ENCODE measurements at regions of chr1 and their contacts with region 1.

Region 1: GRCh38 chr1:16243936-16244649 is 7.1 kb upstream of the CPLANE2 start:
- DNase-seq: peak; percentile 80
- ATAC-seq: peak; percentile 34

Region 2: GRCh38 chr1:16351994-16352841 is 108.1 kb after region 1 on chr1 and contains the start of gene FBXO42:
- intact Hi-C with region 1: loop called (anchors 5 kb)
- DNase-seq: peak; percentile 96
- ATAC-seq: peak; percentile 97
- total RNA-seq, gene FBXO42: 17.1 TPM

Region 3: DNA sequence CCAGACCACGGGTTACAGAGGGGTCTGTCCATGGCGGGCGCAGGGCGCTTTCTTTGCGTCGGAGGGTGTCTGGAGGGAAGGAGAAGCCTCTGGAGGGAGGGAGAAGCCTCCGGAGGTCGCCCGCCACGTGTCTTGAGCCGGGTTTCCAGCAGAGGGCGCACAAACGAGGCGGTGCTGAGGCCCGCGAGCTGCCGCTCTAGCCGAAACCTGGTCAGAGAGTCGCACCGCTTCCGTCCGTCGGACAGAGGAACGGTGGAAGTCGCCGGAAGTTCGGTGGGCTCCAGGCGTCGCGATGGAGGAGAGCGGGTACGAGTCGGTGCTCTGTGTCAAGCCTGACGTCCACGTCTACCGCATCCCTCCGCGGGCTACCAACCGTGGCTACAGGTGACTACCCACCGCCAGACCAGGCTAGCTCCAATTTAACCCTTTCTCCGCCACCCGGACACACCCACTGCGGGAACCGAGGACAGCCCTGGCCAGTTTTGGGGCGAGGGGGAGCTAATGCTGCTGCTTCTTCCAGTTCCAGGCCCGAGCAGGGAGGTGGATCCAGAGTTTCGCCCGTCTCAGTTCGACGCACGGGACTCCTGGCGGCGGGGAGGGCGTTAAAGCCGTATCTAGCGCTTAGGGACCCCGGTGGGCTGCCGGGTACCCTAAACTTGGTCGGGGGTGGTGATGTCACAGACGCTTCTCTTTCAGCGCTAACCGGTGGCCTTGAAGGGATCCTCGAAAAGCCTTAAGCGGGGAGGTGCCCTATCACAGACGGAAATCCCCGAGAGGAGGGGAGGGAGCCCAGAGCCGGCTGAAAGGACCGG is 196.6 kb after region 1 on chr1 and contains the start of gene NECAP2:
- intact Hi-C with region 1: no loop called
- DNase-seq: peak; percentile 97
- ATAC-seq: peak; percentile 97
- total RNA-seq, gene NECAP2: 14.6 TPM